ENCODE measurements at regions of chr2 and their contacts with region 1.

Region 1: DNA sequence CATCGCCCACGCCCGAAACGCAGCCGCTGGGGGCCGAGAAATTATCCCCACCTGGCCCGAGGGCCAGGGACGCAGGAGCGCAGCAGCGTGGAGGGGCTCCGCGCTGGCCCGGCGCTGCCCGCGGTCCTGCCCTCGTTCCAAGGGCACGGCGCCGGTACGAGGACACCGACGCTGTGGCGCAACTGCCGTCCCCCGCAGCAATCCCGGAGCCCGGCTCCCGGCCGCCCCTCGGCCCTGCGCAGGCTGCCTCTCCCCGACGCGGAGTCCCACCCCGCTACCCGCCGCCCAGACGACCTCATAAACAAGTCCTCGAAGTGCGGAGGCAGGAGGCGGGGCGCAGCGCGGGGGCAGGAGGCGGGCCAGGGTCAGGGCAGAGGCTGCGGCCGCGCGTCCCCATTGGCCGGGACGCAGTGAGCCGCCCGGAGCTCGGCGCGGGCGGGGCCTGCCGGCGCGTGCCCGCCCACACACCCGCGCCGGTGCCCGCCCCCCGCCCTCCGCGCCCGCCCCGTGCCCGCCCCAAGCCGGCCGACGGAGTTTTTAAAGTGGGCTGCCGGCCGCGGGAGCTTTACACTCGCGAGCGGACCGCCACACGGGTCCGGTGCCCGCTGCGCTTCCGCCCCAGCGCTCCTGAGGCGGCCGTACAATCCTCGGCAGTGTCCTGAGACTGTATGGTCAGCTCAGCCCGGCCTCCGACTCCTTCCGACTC is at the start of gene EPAS1:
- DNase-seq: peak; percentile 84
- H3K4me3 Mint-ChIP-seq: peak within 1 kb of the TSS; percentile 80
- H3K27ac Mint-ChIP-seq: no peak within 1 kb of the TSS
- H3K4me1 Mint-ChIP-seq: peaks cover 15% of the 10 kb centered on the region
- H3K27me3 Mint-ChIP-seq: peaks cover 47% of the 10 kb centered on the region
- total RNA-seq, gene EPAS1: 2.1 to 2.9 TPM

Region 2: GRCh38 chr2:46010925-46011490 is 286.0 kb before region 1 on chr2:
- CTCF ChIA-PET with region 1: no interaction called
- intact Hi-C with region 1: loop called (anchors 1 kb)
- DNase-seq: no peak
- H3K4me3 Mint-ChIP-seq: no peak overlapping the region
- H3K27ac Mint-ChIP-seq: no peak overlapping the region
- H3K4me1 Mint-ChIP-seq: no peaks in the 10 kb centered on the region
- H3K27me3 Mint-ChIP-seq: no peaks in the 10 kb centered on the region

Region 3: GRCh38 chr2:46062637-46063412 is 234.2 kb before region 1 on chr2:
- CTCF ChIA-PET with region 1: interaction called, 10 read pairs
- intact Hi-C with region 1: loop called (anchors 1 kb)
- DNase-seq: peak; percentile 86
- H3K4me3 Mint-ChIP-seq: no peak overlapping the region
- H3K27ac Mint-ChIP-seq: no peak overlapping the region
- H3K4me1 Mint-ChIP-seq: peaks cover 10% of the 10 kb centered on the region
- H3K27me3 Mint-ChIP-seq: no peaks in the 10 kb centered on the region

Region 4: GRCh38 chr2:46187112-46187618 is 109.8 kb before region 1 on chr2:
- CTCF ChIA-PET with region 1: interaction called, 4 read pairs
- intact Hi-C with region 1: loop called (anchors 5 kb)
- DNase-seq: peak; percentile 70
- H3K4me3 Mint-ChIP-seq: peak overlapping the region; percentile 35
- H3K27ac Mint-ChIP-seq: peak overlapping the region; percentile 86
- H3K4me1 Mint-ChIP-seq: peaks cover 18% of the 10 kb centered on the region
- H3K27me3 Mint-ChIP-seq: peaks cover 2% of the 10 kb centered on the region

Region 5: DNA sequence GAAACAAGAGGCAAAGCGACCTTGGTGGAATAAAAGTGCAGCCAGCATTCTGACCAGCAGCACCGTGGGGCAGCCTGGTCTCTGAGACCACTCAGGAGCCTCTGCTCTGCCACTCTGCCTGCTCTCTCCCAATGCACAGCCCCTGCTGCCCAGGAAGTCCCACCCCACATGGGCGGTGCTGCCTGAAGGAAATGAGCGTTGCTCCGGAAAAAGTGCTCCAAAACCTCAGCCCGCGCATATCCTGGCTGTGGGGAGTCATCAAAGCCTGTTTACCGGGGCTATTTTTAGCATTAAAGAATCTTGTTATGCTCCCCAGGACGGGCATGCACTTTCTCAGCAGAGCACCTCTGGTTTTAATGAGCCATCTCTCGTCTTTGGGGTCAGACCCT is 54.8 kb after region 1 on chr2:
- CTCF ChIA-PET with region 1: interaction called, 5 read pairs
- intact Hi-C with region 1: loop called (anchors 1 kb)
- DNase-seq: peak; percentile 93
- H3K4me3 Mint-ChIP-seq: peak overlapping the region; percentile 81
- H3K27ac Mint-ChIP-seq: peak overlapping the region; percentile 92
- H3K4me1 Mint-ChIP-seq: peaks cover 68% of the 10 kb centered on the region
- H3K27me3 Mint-ChIP-seq: no peaks in the 10 kb centered on the region

Measured in activated naive CD4-positive, alpha-beta T cell treated with anti-CD3 and anti-CD28 coated beads for 36 hours (primary cell).